Naive thymus-derived CD4-positive, alpha-beta T cell (primary cell): ENCODE measurements at regions of chr1 and their contacts with region 1.

Region 1: DNA sequence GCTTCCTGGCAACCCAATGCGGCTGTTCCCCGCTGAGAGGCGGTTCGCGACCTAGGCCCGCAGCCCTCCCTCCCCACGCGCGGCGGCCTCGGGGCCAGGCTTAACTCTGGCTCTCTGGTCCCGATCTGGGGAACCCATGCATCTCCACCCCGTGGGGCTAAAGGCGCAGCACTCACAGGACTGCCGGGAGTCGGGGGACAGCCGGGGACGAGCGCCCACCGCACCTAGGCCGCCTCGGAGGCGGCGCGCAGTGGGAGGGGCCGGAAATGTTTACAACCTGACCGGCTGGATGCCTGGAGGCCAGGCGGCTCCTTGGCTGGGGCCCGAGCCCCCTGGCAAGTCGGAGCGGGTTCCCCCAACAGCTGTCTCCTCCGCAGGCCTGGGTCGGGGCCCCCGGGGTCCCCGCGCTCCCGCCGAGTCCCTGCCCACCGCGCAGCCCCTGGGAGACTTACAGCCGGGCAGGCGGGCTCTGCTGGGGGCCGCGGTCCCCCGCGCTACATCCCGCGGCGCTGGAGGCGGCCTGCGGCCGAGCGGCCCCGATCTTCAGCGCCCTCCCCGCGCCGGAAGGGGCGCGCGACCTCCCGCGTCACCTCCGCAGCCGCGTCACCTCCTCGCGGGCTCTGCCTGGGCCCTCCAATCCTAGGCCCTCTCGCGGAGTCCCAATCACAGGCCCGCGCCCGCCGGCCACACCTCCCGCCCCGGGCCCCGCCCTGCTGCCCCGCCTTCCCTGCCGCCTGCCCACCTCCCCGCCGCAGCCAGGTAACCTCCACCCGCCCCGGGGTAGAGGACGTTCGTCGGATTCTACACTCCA is at the start of gene ADIPOR1:
- DNase-seq: peak; percentile 88 to 96 (median 94)
- ATAC-seq: peak; percentile 99
- H3K4me3 ChIP-seq: peak within 1 kb of the TSS; percentile 84
- H3K4me3 Mint-ChIP-seq: peak within 1 kb of the TSS; percentile 76 to 97 (median 92)
- H3K27ac ChIP-seq: peak within 1 kb of the TSS; percentile 95
- H3K27ac Mint-ChIP-seq: peak within 1 kb of the TSS; percentile 86 to 98 (median 95)
- H3K4me1 ChIP-seq: peaks cover 19 to 39% of the 10 kb centered on the region in 2 donors
- H3K4me1 Mint-ChIP-seq: peaks cover 20 to 55% (median 52%) of the 10 kb centered on the region in 7 donors
- H3K27me3 ChIP-seq: no peaks in the 10 kb centered on the region
- H3K27me3 Mint-ChIP-seq: no peaks in the 10 kb centered on the region
- total RNA-seq, gene ADIPOR1: 51.9 to 84.5 (median 69.6) TPM

Region 2: GRCh38 chr1:202348509-202349205 is 609.3 kb before region 1 on chr1 and contains the start of gene PPP1R12B:
- CTCF ChIA-PET with region 1: no interaction called
- POLR2A ChIA-PET with region 1: no interaction called
- intact Hi-C with region 1: loop called (anchors 2 to 5 kb)
- DNase-seq: peak; percentile 83 to 95 (median 92)
- ATAC-seq: peak; percentile 98
- H3K4me3 ChIP-seq: peak within 1 kb of the TSS; percentile 82
- H3K4me3 Mint-ChIP-seq: peak within 1 kb of the TSS; percentile 87 to 97 (median 93)
- H3K27ac ChIP-seq: peak within 1 kb of the TSS; percentile 73
- H3K27ac Mint-ChIP-seq: peak within 1 kb of the TSS; percentile 64 to 97 (median 86)
- H3K4me1 ChIP-seq: peaks cover 3 to 16% of the 10 kb centered on the region in 2 donors
- H3K4me1 Mint-ChIP-seq: peaks cover 22 to 40% (median 34%) of the 10 kb centered on the region in 7 donors
- H3K27me3 ChIP-seq: no peaks in the 10 kb centered on the region
- H3K27me3 Mint-ChIP-seq: no peaks in the 10 kb centered on the region
- total RNA-seq, gene PPP1R12B: 23.6 to 38.1 (median 31.0) TPM

Region 3: DNA sequence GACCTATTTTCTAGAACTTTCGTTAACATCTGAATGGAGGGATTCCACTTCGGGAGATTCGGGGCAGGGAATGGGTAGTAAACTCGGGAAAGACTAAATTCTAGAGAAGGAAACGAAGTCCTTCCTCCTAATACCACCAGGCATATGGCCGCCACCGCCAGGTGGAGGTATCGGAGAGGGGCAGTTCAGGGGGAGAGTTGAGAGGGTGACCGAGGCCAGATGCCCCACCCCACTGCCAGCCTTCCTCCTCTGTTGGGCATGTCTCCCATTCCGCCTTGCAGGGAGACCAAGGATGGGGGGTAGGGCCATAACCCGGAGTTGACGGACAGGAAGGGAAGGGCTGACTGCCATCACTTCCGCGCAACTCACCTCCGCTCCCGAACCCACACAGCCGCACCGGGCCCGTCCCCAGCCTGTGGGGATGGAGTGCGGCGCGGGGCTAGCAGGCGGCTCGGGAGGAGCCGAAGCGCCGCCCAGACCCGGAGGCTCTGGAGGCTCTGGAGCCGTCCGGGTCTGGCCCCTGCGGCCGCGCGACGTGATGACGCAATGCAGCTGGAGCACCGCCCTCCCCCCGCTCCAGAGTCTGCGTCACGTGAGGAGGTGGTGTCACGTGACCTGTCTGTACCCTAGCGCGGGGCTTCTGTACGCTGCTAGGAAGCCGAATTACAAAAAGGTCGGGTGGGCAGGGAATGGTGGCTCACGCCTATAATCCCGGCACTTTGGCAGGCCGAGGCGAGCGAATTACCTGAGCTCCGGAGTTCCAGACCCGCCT is 31.0 kb before region 1 on chr1 and contains the start of gene KLHL12:
- CTCF ChIA-PET with region 1: interaction called, 3 read pairs
- POLR2A ChIA-PET with region 1: interaction called, 3 read pairs
- intact Hi-C with region 1: loop called (anchors 1 kb)
- DNase-seq: peak; percentile 88 to 95 (median 94)
- ATAC-seq: peak; percentile 97
- H3K4me3 ChIP-seq: peak within 1 kb of the TSS; percentile 97
- H3K4me3 Mint-ChIP-seq: peak within 1 kb of the TSS; percentile 90 to 96 (median 94)
- H3K27ac ChIP-seq: peak within 1 kb of the TSS; percentile 97
- H3K27ac Mint-ChIP-seq: peak within 1 kb of the TSS; percentile 92 to 97 (median 94)
- H3K4me1 ChIP-seq: peaks cover 19 to 26% of the 10 kb centered on the region in 2 donors
- H3K4me1 Mint-ChIP-seq: peaks cover 17 to 40% (median 34%) of the 10 kb centered on the region in 7 donors
- H3K27me3 ChIP-seq: no peaks in the 10 kb centered on the region
- H3K27me3 Mint-ChIP-seq: peaks cover 0 to 11% (median 0%) of the 10 kb centered on the region in 5 donors
- total RNA-seq, gene KLHL12: 15.6 to 28.0 (median 24.5) TPM

Region 4: DNA sequence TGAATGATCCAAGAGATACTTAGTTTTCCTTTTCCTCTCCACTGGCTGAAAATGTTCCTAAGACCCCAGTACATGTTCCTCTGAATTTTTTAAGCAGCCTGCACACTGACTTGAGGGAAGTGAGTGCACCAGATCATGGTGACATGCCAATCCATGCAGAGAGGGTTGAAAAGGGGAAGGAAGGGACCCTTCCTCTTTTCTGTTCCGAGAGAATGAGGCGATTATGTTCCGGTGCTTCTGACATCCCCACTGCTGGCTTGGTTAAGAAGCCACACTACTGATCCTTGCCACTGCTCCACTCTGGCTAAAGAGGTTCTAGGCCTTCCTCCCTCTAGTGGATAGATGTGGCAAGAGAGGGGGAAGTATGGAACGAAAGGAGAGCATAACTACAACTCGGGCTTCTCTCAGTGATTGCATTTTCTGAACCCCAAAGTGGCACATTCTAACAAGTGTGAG is 10.9 kb after region 1 on chr1:
- CTCF ChIA-PET with region 1: interaction called, 7 read pairs
- POLR2A ChIA-PET with region 1: interaction called, 10 read pairs
- intact Hi-C with region 1: loop called (anchors 1 kb)
- DNase-seq: peak in 7 of 9 donors; percentile 24 to 64 (median 47)
- ATAC-seq: peak; percentile 73
- H3K4me3 ChIP-seq: no peak overlapping the region
- H3K4me3 Mint-ChIP-seq: peak overlapping the region in 9 of 10 donors; percentile 40 to 98 (median 94)
- H3K27ac ChIP-seq: peak overlapping the region; percentile 83
- H3K27ac Mint-ChIP-seq: peak overlapping the region in 8 of 9 donors; percentile 80 to 96 (median 94)
- H3K4me1 ChIP-seq: peaks cover 14 to 20% of the 10 kb centered on the region in 2 donors
- H3K4me1 Mint-ChIP-seq: peaks cover 15 to 34% (median 27%) of the 10 kb centered on the region in 7 donors
- H3K27me3 ChIP-seq: no peaks in the 10 kb centered on the region
- H3K27me3 Mint-ChIP-seq: peaks cover 0 to 15% (median 0%) of the 10 kb centered on the region in 5 donors

Region 5: DNA sequence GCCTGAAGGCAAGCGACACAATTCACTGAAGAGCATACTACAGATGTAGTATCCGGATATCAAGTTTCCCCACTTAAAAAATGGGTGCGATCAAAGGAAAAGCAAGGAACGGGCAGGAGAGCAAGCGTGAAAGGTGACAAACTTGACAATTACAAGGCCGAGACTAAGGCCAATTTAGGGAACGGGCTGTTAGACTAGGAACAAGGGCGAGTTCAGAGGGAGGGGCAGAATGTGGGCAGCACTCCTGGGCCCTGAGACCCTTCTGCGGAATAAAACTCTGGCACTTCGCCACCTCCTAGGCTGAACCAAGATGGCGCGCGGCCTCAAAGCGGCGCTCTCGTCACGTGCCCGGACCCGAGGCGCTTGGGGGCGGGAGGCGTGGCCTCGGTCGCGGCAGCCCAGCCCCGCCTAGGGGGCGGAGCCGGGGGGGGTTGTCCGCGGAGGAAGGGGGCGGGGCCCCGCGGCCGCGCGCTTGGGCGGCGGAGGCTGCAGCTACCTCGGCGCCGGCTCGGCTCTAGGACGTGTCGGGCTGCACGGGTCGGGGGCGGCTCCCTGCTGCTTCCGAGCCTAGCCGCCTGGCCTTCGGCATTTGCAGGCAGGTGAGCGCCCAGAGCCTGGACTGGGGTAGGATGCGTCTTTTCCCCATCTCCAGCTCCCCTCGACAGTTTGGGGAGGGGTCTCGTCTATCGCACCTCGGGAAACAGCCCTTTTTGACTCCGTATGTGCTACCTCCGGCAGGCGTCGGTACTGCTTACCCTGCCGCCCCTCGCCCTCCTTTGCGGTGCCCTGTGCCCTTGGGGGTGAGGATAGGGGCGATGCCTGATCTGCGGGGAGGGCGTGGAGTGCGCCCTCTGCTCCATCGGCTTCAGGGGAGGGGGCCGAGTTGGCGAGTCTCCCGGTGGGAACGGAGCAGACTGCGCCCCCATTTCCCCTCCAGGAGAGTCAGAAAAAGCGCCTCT is 68.4 kb after region 1 on chr1 and contains the start of gene PPFIA4:
- CTCF ChIA-PET with region 1: no interaction called
- POLR2A ChIA-PET with region 1: interaction called, 4 read pairs
- intact Hi-C with region 1: loop called in 1 of 2 experiments (anchors 1 kb)
- DNase-seq: peak; percentile 72 to 94 (median 89)
- ATAC-seq: peak; percentile 98
- H3K4me3 ChIP-seq: peak within 1 kb of the TSS; percentile 84
- H3K4me3 Mint-ChIP-seq: peak within 1 kb of the TSS; percentile 74 to 95 (median 84)
- H3K27ac ChIP-seq: peak within 1 kb of the TSS; percentile 53
- H3K27ac Mint-ChIP-seq: peak within 1 kb of the TSS; percentile 73 to 96 (median 85)
- H3K4me1 ChIP-seq: peaks cover 0 to 11% of the 10 kb centered on the region in 2 donors
- H3K4me1 Mint-ChIP-seq: peaks cover 0 to 24% (median 14%) of the 10 kb centered on the region in 7 donors
- H3K27me3 ChIP-seq: no peaks in the 10 kb centered on the region
- H3K27me3 Mint-ChIP-seq: peaks cover 0 to 9% (median 0%) of the 10 kb centered on the region in 5 donors
- total RNA-seq, gene PPFIA4: 0.40 to 45.5 (median 2.4) TPM